Common myeloid progenitor, CD34-positive (primary cell): ENCODE measurements at regions of chr14 and their contacts with region 1.

Region 1: DNA sequence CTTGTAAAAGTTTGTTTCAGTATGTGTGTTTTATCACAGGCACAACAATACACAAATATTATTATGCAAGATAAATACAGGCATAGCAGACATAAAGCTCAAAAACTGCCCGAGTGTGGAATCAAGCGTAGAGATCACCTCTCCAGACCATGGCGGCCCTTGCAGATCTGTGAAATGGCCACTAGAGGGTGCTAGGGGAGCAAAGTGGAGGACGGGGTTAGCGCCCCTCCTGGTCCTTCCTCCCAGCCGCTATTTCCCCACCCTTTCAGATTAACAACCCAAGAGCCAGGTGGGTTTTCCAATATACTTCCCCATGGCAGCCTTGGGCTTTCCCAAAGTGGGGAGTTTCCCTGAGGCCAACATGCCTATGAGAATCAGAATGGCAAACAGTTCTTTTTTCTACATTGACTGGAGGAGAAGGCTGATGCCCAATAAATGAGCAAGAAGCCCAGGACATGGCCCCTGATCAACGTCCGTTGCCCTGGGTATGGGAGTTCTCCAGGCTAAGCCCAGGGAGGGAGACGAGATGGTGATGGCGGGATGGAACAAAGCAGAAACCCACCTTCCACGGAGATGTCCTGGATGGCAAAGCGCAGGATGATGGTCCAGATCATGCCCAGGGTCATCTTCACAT is 67.4 kb downstream of the ACTN1 start:
- DNase-seq: peak; percentile 77 to 89 (median 83)
- H3K4me3 ChIP-seq: no peak overlapping the region
- H3K27ac ChIP-seq: no peak overlapping the region
- H3K4me1 ChIP-seq: no peaks in the 10 kb centered on the region
- H3K27me3 ChIP-seq: no peaks in the 10 kb centered on the region

Region 2: GRCh38 chr14:68718023-68718995 is 193.4 kb before region 1 on chr14:
- CTCF ChIA-PET with region 1: no interaction called
- POLR2A ChIA-PET with region 1: no interaction called
- DNase-seq: peak in 1 of 3 donors; percentile 23
- H3K4me3 ChIP-seq: no peak overlapping the region
- H3K27ac ChIP-seq: no peak overlapping the region
- H3K4me1 ChIP-seq: peaks cover 0 to 6% (median 0%) of the 10 kb centered on the region in 4 experiments
- H3K27me3 ChIP-seq: no peaks in the 10 kb centered on the region

Region 3: DNA sequence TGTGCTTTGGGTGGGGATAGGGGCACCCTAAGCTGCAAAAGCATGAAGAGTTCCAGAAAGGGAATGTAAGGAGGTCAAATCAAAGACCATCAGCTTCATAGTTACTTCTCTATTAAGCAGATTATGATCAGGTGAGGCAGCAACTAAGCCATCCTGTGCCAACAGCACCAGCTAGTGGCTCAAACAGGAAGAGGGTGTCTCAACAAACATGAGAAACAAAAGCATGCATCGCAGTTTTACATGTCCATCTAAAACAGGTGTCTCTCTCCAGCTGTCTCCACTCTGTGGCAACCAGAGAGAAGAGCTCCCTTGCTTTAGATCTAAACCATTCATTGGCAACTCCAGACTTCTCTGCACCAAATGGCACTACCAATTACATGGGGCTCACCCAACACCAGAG is 14.5 kb after region 1 on chr14:
- CTCF ChIA-PET with region 1: interaction called, 121 read pairs
- POLR2A ChIA-PET with region 1: no interaction called
- DNase-seq: peak; percentile 33 to 74 (median 71)
- H3K4me3 ChIP-seq: no peak overlapping the region
- H3K27ac ChIP-seq: no peak overlapping the region
- H3K4me1 ChIP-seq: peaks cover 0 to 53% (median 44%) of the 10 kb centered on the region in 4 experiments
- H3K27me3 ChIP-seq: no peaks in the 10 kb centered on the region

Region 4: DNA sequence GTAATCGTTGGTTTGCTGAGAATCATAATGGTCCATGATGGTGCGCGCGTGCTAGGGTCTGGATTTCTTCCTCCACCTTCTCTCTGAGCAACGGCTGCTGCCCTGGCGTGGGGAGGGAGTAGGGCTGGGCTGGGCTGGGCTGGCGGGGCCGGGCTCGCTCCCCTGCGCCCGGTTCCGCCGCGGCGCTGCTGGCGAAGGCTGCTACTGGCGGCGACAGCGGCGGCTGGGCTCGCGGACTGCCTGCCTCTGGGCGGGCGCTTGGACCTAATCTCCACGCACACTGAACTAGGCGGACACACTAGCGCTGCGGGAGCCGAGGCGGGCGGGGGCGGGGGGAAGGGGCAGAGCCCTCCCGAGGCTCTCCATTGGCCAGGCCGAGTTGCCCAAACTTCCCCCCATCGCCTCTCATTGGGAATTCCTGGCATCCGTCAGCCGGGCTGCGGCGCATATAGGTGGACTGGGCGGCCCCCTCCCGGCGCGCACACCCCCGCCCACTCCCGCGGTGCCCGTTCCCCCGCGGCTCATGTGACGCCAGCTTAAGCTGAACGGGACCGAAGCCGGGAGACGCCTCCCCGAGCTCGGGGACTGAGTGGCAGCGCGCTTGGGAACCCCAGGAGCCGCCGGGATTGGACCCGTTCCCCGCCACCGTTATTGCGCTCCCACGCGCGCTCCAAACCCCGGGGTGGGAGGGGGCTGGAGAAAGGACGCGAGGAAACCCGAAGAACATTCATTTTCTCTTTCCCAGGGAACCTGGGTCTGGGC is 67.5 kb after region 1 on chr14 and contains the start of gene ACTN1:
- CTCF ChIA-PET with region 1: interaction called, 10 read pairs
- POLR2A ChIA-PET with region 1: no interaction called
- DNase-seq: peak; percentile 85 to 94 (median 90)
- H3K4me3 ChIP-seq: peak within 1 kb of the TSS; percentile 53 to 89 (median 83)
- H3K27ac ChIP-seq: peak within 1 kb of the TSS in 1 of 2 experiments; percentile 70
- H3K4me1 ChIP-seq: peaks cover 7 to 28% (median 24%) of the 10 kb centered on the region in 4 experiments
- H3K27me3 ChIP-seq: peaks cover 0 to 4% (median 0%) of the 10 kb centered on the region in 5 experiments

Region 5: DNA sequence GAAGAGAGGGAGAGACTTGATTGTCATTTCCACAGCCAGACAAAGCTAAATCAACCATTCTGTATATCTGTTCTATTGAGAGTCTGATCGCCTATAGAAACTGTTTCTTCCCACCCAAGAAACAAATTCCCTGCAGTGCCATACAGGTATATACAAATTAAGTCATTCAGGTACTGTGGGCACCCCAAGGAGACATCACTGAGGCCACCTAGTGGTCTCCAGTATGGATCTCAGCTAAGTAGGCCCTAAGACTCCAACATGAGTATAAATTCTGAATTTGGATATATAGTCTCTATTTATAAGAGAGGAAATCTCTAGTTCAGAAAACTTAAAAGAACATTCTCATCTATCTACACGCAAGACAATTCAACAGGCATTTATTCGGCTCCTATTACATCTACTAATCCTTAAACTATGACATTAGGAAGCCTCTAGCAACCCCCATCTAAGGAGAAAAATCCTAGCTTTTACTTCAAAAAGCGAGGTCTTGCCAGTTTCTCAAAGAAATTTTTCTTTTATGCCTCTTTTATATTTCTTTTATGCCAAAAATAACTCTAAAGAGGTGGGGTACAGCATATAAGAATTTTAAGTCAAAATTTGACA is 178.6 kb after region 1 on chr14:
- CTCF ChIA-PET with region 1: interaction called, 83 read pairs
- POLR2A ChIA-PET with region 1: no interaction called
- DNase-seq: peak; percentile 39 to 59 (median 59)
- H3K4me3 ChIP-seq: no peak overlapping the region
- H3K27ac ChIP-seq: no peak overlapping the region
- H3K4me1 ChIP-seq: peaks cover 0 to 9% (median 8%) of the 10 kb centered on the region in 4 experiments
- H3K27me3 ChIP-seq: no peaks in the 10 kb centered on the region

Region 6: DNA sequence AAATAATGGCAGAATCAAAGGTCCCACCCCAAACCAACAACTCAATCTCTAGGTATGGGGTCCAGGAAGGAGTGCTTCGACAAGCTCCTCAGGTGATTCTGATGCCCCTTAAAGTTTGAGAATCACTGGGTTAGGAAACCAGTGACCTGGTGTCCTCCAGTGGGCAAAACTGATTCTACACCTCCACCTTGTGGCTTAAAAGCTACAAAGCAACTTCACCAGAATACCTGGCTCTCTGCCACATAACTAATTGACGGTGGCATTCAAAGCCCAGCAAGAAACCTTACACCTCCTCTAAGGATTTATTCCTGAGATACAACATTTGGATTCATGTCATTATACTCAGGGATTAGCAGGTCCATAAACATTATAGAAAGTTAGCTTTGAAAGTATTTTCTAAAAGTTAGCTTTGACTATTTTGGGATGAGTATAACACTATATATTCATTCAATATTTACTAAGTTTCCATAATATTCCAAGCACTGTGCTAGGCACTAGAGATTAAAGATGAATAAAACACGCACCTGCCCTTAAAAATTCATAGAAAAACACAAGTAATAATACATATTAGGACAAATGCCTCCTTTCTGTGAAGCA is 195.8 kb after region 1 on chr14:
- CTCF ChIA-PET with region 1: interaction called, 51 read pairs
- POLR2A ChIA-PET with region 1: no interaction called
- DNase-seq: peak; percentile 64 to 80 (median 73)
- H3K4me3 ChIP-seq: no peak overlapping the region
- H3K27ac ChIP-seq: no peak overlapping the region
- H3K4me1 ChIP-seq: no peaks in the 10 kb centered on the region
- H3K27me3 ChIP-seq: no peaks in the 10 kb centered on the region

Region 7: DNA sequence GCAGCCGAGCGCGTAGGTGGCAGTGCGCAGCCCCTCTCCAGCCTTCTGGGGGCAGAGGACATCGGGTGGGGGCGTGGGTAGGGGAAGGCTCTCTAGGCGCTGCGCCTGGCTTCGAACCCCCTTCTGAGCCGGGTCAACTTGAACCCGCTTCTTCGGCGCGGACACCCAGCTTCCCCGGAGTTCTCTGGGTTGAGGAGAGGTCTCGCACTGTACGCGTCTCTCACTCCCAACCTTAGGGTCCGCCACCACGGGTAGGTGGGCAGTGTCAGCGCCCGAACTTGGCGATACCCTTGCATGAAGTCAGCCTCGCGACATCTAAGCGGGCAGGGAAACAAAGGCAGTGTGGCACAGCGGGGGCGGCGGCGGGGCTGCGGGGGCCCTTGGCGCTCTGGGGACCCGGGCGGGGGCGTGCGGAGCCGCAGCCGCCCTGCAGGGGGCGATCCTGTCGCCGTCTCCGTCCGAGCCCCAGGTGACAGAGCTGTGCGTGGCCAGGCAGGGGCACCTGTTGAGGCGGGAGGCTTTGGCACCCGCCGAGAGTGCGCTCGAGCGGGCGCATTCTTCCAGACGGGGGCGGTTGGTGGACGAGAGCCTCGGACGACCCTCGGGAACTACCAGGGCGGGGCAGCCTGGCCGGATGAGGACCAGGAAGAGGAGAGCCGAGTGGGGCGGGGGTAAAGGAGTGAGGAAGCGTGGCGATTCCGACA is 349.3 kb after region 1 on chr14:
- CTCF ChIA-PET with region 1: no interaction called
- POLR2A ChIA-PET with region 1: no interaction called
- DNase-seq: peak in 2 of 3 donors; percentile 39 to 41
- H3K4me3 ChIP-seq: peak overlapping the region in 6 of 7 experiments; percentile 46 to 76 (median 63)
- H3K27ac ChIP-seq: no peak overlapping the region
- H3K4me1 ChIP-seq: peaks cover 0 to 23% (median 19%) of the 10 kb centered on the region in 4 experiments
- H3K27me3 ChIP-seq: peaks cover 7 to 94% (median 57%) of the 10 kb centered on the region in 5 experiments